Posterior vena cava (tissue), 2 donors: ENCODE measurements at regions of chr20 and their contacts with region 1.

Region 1: DNA sequence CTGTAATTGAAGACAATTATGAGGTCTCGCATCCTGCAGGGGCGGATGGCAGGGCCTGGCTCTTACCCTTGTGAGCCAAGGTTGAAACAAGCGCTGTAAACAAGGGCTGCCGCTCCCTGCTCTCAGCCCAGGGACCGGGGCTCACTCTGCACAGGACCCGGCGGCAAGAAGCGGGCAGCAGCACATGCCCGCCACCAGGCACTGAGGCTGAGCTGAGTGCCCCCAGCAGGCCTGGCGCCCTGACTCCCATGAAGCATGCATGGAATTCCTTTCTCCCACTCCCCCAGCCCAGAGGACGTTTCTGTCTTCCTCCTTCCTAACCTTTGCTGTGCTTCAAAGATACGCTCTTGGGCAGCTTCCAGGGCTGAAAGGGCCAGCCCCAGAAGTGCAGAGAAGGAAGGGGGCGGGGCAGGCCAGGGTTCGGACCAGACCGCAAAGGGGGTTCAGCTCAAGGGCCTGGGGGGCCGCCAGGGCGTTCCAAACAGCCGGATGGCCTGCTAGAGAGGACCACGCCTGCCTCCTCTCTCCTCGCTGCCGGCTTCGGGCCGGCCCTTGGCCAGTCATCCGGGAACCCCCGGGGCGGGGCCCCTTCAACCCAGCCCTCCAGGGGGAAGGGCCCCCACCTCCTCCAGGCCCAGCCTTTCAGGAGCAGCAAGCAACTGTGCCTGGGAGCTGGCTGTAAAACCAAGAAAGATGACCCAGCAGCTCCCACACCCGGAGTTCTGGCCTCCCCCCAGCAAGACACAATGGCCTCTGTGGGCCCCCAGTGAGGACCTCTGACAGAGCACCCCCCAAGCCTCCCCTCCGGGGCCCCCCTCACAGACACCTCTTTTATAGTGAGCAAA is 109.9 kb downstream of the NOL4L start:
- DNase-seq: peak; percentile 97

Region 2: GRCh38 chr20:32285621-32286371 is 189.4 kb before region 1 on chr20:
- intact Hi-C with region 1: loop called in 1 of 2 experiments (anchors 10 kb)
- DNase-seq: no peak

Region 3: DNA sequence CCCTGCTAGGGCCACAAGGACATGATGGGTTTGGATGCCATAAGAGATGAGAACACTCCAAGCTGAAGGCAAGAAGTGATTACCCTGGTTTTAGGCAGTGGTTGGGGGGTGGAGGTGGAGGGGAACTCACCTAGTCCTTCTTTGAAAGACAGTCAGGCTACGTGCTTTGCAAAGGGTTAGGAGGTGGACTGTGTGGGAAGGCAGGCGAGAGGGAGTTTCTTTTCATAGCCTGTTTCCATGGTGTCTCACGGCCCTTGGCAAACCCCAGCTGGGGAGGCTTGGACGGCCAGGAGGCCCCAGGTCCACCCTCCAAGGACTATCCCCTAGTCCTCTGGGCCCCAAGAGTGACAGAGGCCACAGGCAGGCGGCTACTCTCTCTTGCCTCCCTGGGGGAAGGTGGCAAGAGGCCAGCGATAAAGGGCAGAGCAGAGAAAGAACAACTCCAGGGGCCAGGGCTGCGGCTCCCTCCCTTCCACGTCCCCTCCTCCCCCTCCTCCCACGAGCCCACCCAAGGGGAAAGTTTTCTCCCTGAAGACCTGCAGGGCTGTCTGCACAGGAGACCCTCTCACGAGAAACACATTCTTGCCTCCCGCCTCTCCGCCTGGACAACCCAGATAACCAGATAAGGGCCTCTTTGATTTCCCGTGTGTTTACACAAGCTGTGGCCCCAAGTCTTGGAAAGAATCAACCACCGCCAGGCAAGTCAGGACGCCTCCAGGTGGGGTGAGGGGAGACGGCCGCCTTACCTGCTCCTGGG is 35.6 kb after region 1 on chr20:
- intact Hi-C with region 1: loop called in 1 of 2 experiments (anchors 1 kb)
- DNase-seq: peak; percentile 58

Region 4: DNA sequence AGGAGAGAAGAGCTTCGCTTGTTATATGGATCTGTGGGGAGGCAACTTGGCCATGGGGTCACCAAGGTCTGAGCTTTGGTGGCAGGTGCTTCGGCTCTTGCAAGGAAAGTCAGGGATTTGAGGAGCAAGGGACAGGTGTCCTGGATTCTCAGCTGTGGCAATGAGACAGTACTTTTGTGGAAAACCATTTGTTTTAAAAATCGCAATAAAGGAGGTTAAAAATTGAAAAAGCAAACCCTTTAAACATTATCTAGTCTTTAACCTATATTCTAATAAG is 45.7 kb after region 1 on chr20:
- intact Hi-C with region 1: no loop called
- DNase-seq: no peak